ENCODE measurements at regions of chr9 and their contacts with region 1.

Region 1: GRCh38 chr9:130107234-130107861 is 53.6 kb downstream of the GPR107 start:
- DNase-seq: peak; percentile 84 to 93 (median 90)
- H3K4me3 ChIP-seq: no peak overlapping the region
- H3K27ac ChIP-seq: no peak overlapping the region
- H3K4me1 ChIP-seq: peaks cover 4% of the 10 kb centered on the region
- H3K27me3 ChIP-seq: no peaks in the 10 kb centered on the region
- CTCF ChIP-seq: peak; percentile 52 to 89 (median 85)
- EP300 ChIP-seq: no peak
- POLR2A ChIP-seq: no peak

Region 2: DNA sequence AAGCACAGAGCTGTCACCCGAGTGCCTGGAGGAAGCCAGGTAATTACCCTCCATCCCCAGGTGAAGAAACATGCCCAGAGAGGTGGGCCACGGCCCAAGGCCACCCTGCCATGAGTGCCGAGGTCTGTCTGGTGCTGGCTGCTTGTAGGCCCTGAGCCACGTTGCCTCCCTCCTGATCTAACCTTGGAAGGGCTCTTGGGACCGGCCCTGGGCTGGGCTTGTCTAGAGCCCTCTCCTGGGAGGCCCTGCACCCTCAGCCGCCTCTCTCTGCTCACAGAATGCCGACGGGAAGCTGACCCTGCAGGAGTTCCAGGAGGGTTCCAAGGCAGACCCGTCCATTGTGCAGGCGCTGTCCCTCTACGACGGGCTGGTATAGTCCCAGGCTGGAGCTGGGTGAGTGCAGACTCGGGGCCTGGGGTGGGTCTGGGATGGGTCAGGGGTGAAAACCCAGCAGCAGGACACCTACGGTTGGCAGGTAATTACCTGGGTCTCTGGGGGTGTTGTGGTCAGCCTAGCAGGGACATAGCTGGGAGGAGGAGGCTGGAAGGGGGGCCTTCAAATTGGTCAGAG is 118.8 kb after region 1 on chr9:
- intact Hi-C with region 1: loop called in 1 of 4 experiments (anchors 5 kb)
- DNase-seq: peak in 2 of 5 donors; percentile 13 to 21
- H3K4me3 ChIP-seq: no peak overlapping the region
- H3K27ac ChIP-seq: no peak overlapping the region
- H3K4me1 ChIP-seq: no peaks in the 10 kb centered on the region
- H3K27me3 ChIP-seq: no peaks in the 10 kb centered on the region
- CTCF ChIP-seq: no peak
- EP300 ChIP-seq: no peak
- POLR2A ChIP-seq: no peak

Region 3: DNA sequence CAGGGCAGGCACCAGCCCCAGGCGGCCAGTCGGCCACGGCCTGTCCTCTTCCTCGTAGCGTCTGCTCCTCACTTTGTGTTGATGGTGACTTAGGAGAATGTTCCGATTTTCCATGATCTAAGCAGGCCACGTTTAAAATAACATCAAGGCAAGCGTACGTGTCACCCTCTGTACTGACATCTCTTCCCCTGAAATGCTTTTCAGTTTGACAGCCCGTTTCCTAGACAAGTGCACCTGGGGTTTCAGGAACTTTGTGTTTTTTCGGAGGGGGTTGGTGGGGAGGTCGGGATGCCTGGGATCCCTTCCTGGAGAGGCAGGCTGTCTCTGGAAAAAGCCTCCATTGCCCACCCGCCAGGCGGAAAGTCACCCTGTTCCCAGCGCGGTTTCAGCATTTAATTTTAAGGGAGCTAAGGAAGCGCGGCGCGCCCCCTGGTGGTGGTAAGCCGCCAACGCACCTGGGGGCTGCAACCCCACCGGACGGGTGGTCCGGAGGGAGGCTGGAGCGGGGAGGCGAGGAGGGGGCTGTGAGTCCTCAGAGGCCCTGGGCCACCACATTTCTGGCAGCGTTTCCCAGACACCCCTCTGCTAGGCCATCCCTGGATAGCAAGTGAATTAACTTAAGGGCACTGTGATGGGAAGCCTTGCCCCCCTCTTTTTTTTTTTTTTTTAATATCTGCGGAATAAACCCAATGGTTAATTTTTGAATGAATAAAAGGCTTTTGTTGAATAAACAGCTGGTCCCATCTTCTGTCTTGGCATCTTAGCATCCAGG is 128.7 kb after region 1 on chr9:
- intact Hi-C with region 1: loop called (anchors 2 to 5 kb)
- DNase-seq: peak; percentile 63 to 86 (median 79)
- H3K4me3 ChIP-seq: no peak overlapping the region
- H3K27ac ChIP-seq: no peak overlapping the region
- H3K4me1 ChIP-seq: peaks cover 3% of the 10 kb centered on the region
- H3K27me3 ChIP-seq: no peaks in the 10 kb centered on the region
- CTCF ChIP-seq: peak; percentile 96 to 99 (median 98)
- EP300 ChIP-seq: no peak
- POLR2A ChIP-seq: peak; percentile 17

Region 4: GRCh38 chr9:130331573-130331972 is 224.2 kb after region 1 on chr9:
- intact Hi-C with region 1: loop called in 1 of 4 experiments (anchors 10 kb)
- DNase-seq: peak in 2 of 5 donors; percentile 46 to 54
- H3K4me3 ChIP-seq: no peak overlapping the region
- H3K27ac ChIP-seq: no peak overlapping the region
- H3K4me1 ChIP-seq: peaks cover 7% of the 10 kb centered on the region
- H3K27me3 ChIP-seq: no peaks in the 10 kb centered on the region
- CTCF ChIP-seq: no peak
- EP300 ChIP-seq: no peak
- POLR2A ChIP-seq: no peak

Region 5: DNA sequence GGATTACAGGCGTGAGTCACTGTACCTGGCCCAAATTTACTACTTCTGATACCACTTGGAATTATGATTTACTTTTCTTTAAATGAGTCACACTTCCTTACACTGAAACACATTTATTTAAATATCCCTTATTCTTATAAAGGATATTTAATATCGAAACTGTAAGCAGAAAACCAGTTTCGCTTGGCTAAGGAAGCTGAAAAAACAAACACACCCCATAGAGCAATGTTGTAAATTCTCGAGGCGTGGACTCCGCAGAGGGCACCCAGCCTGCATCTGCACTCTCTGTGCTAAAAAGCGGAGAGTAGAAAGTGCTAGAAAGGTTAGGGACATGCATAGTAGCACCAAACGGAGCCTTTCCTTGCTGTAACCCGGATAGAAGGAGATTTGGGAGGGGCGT is 244.7 kb after region 1 on chr9:
- intact Hi-C with region 1: loop called in 1 of 4 experiments (anchors 10 kb)
- DNase-seq: no peak
- H3K4me3 ChIP-seq: no peak overlapping the region
- H3K27ac ChIP-seq: no peak overlapping the region
- H3K4me1 ChIP-seq: no peaks in the 10 kb centered on the region
- H3K27me3 ChIP-seq: no peaks in the 10 kb centered on the region
- CTCF ChIP-seq: no peak
- EP300 ChIP-seq: no peak
- POLR2A ChIP-seq: no peak

Region 6: DNA sequence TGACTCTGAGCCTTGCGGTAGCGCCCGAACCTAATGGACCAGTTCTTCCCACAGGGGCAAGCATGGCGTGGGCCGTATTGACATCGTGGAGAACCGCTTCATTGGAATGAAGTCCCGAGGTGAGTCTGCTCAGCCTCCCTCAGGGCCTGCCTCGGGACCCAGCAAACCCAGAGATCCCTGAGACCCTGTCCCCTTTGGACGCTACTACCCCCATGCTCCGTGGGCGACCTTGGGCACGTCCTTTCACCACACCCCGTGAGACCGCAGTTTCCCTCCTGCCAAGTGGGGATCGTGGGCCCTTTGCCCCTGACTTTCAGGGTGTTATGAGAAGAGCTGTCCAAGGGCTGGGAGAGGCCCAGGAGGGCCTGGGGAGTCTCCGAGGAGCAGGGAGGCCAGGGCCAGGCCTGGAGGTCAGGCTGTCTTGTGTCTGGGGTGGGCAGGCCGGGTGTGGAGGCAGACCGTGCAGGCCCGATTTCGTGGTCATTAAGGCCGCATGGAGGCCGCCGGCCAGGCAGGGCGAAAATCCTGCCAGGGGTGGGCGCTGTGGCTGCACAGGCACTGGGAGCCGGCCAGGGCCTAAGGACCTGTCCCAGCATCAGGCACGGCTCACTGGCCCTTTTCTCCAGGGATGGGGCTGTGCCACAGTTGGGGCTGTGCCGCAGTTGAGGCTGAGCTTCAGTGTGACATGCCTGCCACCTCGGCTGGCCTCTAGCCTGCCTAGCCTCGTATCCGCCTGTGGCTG is 373.2 kb after region 1 on chr9:
- intact Hi-C with region 1: no loop called
- DNase-seq: no peak
- H3K4me3 ChIP-seq: no peak overlapping the region
- H3K27ac ChIP-seq: no peak overlapping the region
- H3K4me1 ChIP-seq: no peaks in the 10 kb centered on the region
- H3K27me3 ChIP-seq: no peaks in the 10 kb centered on the region
- CTCF ChIP-seq: no peak
- EP300 ChIP-seq: no peak
- POLR2A ChIP-seq: no peak

Region 7: DNA sequence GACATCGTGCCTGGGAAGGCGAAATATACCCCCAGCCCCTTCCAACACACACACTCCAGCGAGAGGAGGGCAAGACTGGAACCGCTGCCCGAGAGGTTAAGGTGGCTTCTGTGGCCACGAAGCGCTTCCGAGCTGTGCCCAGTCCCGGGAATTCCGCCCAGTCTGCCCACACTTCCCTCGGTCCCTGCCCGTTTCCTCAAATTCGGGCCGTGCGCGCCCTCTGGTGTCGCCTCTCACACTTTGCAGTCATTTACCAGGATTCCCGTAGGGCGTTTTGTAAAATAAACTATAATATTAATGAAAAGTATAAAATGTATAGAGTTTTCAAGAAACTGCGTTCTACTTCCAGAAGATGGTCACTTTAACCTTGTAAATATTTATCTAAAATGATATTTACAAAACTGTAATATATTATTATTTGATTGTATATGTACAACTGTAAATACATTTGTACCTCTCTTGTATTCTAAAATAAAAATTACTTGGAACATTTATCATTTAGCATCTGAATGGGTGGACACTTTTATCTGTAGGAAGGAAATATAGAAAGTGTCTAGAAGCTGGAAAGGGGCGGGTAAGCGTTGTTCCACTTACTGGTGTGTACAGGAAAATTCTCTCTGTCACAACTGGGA is 575.3 kb after region 1 on chr9:
- intact Hi-C with region 1: loop called in 2 of 4 experiments (anchors 10 kb)
- DNase-seq: peak; percentile 61 to 81 (median 75)
- H3K4me3 ChIP-seq: peak overlapping the region; percentile 40
- H3K27ac ChIP-seq: no peak overlapping the region
- H3K4me1 ChIP-seq: peaks cover 4% of the 10 kb centered on the region
- H3K27me3 ChIP-seq: no peaks in the 10 kb centered on the region
- CTCF ChIP-seq: peak; percentile 70 to 74 (median 72)
- EP300 ChIP-seq: no peak
- POLR2A ChIP-seq: no peak